ENCODE measurements at regions of chr7 and their contacts with region 1.

Region 1: DNA sequence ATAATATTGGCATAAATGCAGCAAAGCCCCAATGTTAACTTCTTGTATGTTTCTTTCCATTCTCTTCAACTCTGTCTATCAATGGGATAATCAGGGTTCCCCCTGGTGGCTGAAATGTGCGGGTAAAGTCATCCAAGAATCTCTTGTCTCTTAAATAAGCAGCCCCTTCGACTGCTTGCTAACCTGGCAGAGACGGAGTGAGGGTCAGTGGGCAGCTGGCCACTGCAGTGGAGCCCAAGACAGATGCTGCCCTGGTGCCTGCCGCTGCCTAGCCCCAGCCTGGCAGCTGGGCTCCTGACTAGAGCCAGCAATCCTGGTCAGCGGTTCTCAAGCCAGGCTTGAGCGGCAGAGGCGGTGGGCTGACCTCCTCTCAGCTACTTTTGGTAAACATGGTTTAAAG is 248.9 kb downstream of the COBL start:
- DNase-seq: peak in 1 of 2 donors; percentile 72
- H3K4me3 ChIP-seq: no peak overlapping the region
- H3K27ac ChIP-seq: no peak overlapping the region
- H3K4me1 ChIP-seq: peaks cover 0 to 12% (median 0%) of the 10 kb centered on the region in 4 donors
- H3K27me3 ChIP-seq: no peaks in the 10 kb centered on the region
- CTCF ChIP-seq: peak; percentile 64 to 67

Region 2: DNA sequence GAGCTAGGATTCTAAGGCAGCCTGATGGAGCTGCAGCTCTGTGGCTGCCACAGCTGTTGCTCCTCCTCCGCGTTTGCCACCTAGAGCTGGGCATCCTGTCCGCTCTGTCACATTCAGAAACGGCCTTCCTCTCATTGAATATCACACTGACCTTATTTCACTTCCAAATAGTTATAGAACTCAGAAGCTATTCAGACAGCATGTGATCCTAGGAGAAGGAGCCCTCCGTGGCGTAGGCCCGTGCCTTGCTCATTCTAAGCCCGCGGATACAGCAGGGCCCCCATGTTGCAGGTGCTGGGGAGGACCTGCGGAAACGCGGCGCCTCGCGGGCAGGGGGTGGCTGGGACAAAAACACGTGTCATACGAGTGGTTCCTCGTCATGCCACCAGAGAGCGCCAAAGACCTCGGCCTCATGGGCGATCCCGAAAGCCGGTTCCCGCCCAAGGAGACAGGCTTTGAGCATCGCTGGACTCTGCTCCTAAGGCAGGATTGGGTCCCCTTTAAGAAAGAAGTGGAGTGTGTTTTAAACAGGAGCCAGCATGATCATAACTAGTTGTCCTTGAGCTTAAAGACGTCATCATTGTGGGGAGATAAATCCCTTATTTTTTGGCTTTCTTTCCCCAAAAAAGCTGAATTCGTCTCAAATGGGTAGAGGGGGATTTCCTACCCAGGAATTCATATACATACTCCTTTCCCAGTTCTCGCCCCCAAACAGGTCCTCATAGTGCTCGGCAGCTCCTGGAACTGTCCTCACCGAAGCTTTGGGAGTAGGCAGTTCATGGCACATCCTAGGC is 599.7 kb before region 1 on chr7:
- intact Hi-C with region 1: loop called (anchors 5 kb)
- DNase-seq: peak; percentile 73 to 84
- H3K4me3 ChIP-seq: no peak overlapping the region
- H3K27ac ChIP-seq: no peak overlapping the region
- H3K4me1 ChIP-seq: peaks cover 0 to 8% (median 4%) of the 10 kb centered on the region in 4 donors
- H3K27me3 ChIP-seq: peaks cover 0 to 5% of the 10 kb centered on the region in 2 donors
- CTCF ChIP-seq: peak; percentile 90 to 94

Region 3: GRCh38 chr7:50679218-50680007 is 388.3 kb before region 1 on chr7:
- intact Hi-C with region 1: loop called (anchors 10 kb)
- DNase-seq: no peak
- H3K4me3 ChIP-seq: no peak overlapping the region
- H3K27ac ChIP-seq: no peak overlapping the region
- H3K4me1 ChIP-seq: peaks cover 0 to 53% (median 36%) of the 10 kb centered on the region in 4 donors
- H3K27me3 ChIP-seq: no peaks in the 10 kb centered on the region
- CTCF ChIP-seq: peak; percentile 33 to 50

Region 4: GRCh38 chr7:50782384-50783208 is 285.2 kb before region 1 on chr7 and contains the start of gene GRB10:
- intact Hi-C with region 1: loop called (anchors 10 kb)
- DNase-seq: peak in 1 of 2 donors; percentile 72
- H3K4me3 ChIP-seq: peak within 1 kb of the TSS; percentile 55 to 62
- H3K27ac ChIP-seq: peak within 1 kb of the TSS in 1 of 2 donors; percentile 4
- H3K4me1 ChIP-seq: peaks cover 0 to 32% (median 10%) of the 10 kb centered on the region in 4 donors
- H3K27me3 ChIP-seq: no peaks in the 10 kb centered on the region
- CTCF ChIP-seq: peak in 1 of 2 experiments; percentile 22

Region 5: GRCh38 chr7:51315393-51316261 is 247.9 kb after region 1 on chr7:
- intact Hi-C with region 1: no loop called
- DNase-seq: no peak
- H3K4me3 ChIP-seq: peak overlapping the region; percentile 43 to 58
- H3K27ac ChIP-seq: no peak overlapping the region
- H3K4me1 ChIP-seq: peaks cover 0 to 18% (median 15%) of the 10 kb centered on the region in 4 donors
- H3K27me3 ChIP-seq: peaks cover 0 to 34% of the 10 kb centered on the region in 2 donors
- CTCF ChIP-seq: no peak

Measured in tibial artery (tissue), 4 donors.